ENCODE measurements at regions of chr13 and their contacts with region 1.

Region 1: DNA sequence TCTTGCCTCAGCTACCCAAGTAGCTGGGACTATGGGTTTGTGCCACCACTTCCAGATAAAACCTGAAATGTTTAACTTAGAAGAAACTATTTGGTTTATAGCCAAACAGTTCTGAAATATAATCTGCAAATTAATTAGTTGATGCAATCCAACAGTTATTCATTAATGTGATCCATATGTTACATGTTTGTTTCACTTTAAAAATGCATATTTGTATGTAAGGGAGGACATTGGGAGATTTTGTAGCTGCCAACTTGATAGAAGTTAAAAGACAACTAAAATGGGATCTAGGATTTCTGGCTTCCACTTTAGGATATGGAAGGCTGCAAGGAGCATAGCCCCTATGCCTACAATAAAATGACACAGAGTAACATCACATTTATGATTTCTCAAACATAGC is 532.5 kb upstream of the SLC10A2 start:
- DNase-seq: no peak
- ATAC-seq: no peak
- H3K4me3 ChIP-seq: no peak overlapping the region
- H3K27ac ChIP-seq: no peak overlapping the region
- H3K4me1 ChIP-seq: no peaks in the 10 kb centered on the region
- H3K27me3 ChIP-seq: no peaks in the 10 kb centered on the region
- CTCF ChIP-seq: no peak
- POLR2A ChIP-seq: no peak
- RAD21 ChIP-seq: no peak

Region 2: DNA sequence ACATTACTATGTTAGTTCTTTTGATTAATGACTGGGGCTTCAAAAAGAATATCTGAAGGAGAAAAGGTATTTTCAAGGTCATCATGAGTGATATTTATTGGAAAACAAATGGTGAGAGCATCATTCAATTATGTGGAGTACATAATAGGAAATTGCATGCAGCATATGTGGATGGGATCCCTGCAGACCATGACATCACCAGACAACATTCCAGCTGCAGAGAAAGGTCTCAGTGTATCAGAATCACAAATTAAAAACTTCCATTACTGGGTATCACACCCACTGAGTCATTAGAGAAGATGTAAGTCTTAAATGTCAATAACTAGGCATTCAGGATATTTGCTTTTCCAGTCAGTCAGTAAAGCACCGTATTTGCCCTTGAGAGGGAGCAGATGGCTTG is 41.9 kb after region 1 on chr13:
- CTCF ChIA-PET with region 1: no interaction called
- POLR2A ChIA-PET with region 1: no interaction called
- dilution Hi-C with region 1: no loop called
- in situ Hi-C with region 1: no loop called
- intact Hi-C with region 1: no loop called
- DNase-seq: no peak
- ATAC-seq: no peak
- H3K4me3 ChIP-seq: no peak overlapping the region
- H3K27ac ChIP-seq: no peak overlapping the region
- H3K4me1 ChIP-seq: no peaks in the 10 kb centered on the region
- H3K27me3 ChIP-seq: no peaks in the 10 kb centered on the region
- CTCF ChIP-seq: no peak
- POLR2A ChIP-seq: no peak
- RAD21 ChIP-seq: no peak

Region 3: GRCh38 chr13:103694033-103694432 is 95.4 kb after region 1 on chr13:
- CTCF ChIA-PET with region 1: no interaction called
- POLR2A ChIA-PET with region 1: no interaction called
- dilution Hi-C with region 1: no loop called
- in situ Hi-C with region 1: loop called (anchors 25 kb)
- intact Hi-C with region 1: no loop called
- DNase-seq: no peak
- ATAC-seq: no peak
- H3K4me3 ChIP-seq: no peak overlapping the region
- H3K27ac ChIP-seq: no peak overlapping the region
- H3K4me1 ChIP-seq: no peaks in the 10 kb centered on the region
- H3K27me3 ChIP-seq: no peaks in the 10 kb centered on the region
- CTCF ChIP-seq: no peak
- POLR2A ChIP-seq: no peak
- RAD21 ChIP-seq: no peak

Region 4: GRCh38 chr13:104296286-104296685 is 697.6 kb after region 1 on chr13:
- CTCF ChIA-PET with region 1: no interaction called
- POLR2A ChIA-PET with region 1: no interaction called
- dilution Hi-C with region 1: no loop called
- in situ Hi-C with region 1: no loop called
- intact Hi-C with region 1: no loop called
- DNase-seq: no peak
- ATAC-seq: no peak
- H3K4me3 ChIP-seq: no peak overlapping the region
- H3K27ac ChIP-seq: no peak overlapping the region
- H3K4me1 ChIP-seq: peaks cover 2% of the 10 kb centered on the region; the same call in 1 of the 2 replicates
- H3K27me3 ChIP-seq: no peaks in the 10 kb centered on the region
- CTCF ChIP-seq: no peak
- POLR2A ChIP-seq: no peak
- RAD21 ChIP-seq: no peak

Measured in IMR-90 (cell line).